Posterior cingulate gyrus (tissue), 11 donors: ENCODE measurements at regions of chr9 and their contacts with region 1.

Region 1: GRCh38 chr9:112570671-112571167 is 84.1 kb downstream of the KIAA1958 start:
- DNase-seq: peak; percentile 36 to 92 (median 58)

Region 2: DNA sequence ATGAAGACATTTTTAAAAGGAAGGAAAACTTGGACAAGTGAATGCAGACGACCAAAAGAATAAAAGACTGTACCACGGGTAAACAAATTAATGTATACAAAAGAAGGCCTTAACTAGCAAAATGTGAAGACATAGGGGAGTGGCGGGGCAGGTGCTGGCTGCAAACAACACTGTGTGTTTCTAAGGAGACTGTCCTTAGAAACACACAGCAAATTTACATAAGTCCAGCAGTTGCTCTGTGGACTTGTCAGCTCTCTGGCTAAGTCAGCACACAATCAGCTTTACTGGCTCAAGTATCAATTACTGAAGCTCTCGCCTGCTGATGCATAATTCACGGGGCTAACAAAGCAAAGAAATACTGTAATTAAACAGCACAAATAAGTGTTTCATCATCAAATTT is 262.1 kb before region 1 on chr9:
- intact Hi-C with region 1: no loop called
- DNase-seq: no peak

Region 3: DNA sequence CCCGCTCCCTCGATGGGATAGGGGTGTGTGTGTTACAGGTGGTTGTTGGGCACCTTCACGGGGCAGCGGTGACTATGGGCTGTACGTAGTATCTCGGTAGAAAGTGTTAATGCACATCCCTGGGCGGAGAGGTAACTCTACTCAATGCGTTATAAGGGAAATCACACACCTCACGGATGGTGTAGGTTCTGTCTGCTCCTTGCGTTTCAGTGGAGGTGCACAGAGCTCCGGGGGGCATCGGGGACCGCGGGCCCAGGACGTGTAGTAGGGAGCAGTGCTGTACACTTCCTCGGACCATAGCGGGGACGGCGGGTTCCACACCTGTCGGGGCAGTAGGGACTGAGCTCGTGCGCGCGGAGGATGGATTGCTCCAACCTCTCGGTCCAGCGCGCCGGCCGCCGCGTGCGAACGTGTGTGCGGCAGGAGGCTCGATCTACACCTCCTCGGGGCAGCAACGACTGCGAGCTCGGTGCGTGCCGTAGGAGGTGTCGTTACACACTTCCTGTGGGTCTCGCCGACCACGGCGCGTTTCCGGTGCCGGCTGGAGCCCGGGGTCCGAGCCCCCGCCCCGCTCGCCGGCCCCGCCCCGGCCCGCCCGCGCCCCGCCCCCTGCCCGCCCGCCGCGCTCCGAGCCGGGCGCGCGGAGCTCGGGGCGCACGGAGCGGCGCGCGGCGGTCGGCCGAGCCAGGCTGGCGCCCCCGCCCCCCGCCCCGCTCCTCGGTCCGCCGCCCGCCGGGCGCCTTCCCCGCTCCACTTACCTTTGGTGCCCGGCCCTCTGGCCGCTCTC is 84.3 kb before region 1 on chr9 and contains the start of gene KIAA1958:
- intact Hi-C with region 1: loop called (anchors 5 kb)
- DNase-seq: peak; percentile 65 to 97 (median 76)